MCF 10A (cell line): ENCODE measurements at regions of chr10 and their contacts with region 1.

Region 1: DNA sequence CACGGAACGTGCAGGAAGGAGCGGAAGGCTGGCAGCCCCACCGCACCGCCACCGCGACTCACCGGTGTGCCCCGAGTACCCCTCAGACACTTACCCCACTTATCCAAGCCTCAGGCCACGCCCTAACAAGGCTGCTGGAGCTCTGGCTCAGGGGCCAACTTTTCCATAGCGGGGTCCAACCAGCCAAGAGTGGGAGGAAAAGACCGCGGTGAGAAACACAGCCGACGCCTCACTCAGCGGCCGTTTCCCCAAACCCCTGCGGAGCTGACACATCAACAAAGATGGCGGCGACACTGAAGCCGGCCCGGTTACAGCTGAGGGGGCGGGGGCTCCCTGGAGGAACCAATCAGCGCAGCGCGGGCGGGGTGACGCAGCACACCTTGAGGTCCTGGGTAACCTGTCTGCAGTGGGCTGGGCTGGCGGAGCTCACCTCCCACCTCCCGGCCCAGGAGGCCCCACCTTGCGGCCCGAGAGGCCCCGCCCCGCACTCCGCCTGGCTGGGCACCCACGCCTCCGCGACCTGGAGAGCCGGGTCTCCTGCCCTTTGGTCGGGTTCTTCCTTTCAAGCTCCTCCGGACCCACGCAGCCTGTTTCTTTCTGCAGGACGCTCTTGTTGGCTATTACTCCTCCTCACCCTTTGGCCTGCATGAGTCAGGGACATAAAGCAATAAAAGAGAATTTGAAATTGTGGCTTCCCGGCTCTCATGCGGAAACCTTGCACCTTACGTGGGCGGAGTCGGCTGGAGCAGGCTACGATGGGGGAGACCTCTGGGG is at the start of gene CCDC186:
- DNase-seq: peak; percentile 96
- H3K4me3 Mint-ChIP-seq: peak within 1 kb of the TSS; percentile 97
- H3K27ac Mint-ChIP-seq: peak within 1 kb of the TSS; percentile 99
- H3K4me1 Mint-ChIP-seq: peaks cover 6% of the 10 kb centered on the region
- H3K27me3 Mint-ChIP-seq: no peaks in the 10 kb centered on the region
- CTCF ChIP-seq: no peak
- total RNA-seq, gene CCDC186: 20.6 and 20.9 TPM in 2 replicates

Region 2: DNA sequence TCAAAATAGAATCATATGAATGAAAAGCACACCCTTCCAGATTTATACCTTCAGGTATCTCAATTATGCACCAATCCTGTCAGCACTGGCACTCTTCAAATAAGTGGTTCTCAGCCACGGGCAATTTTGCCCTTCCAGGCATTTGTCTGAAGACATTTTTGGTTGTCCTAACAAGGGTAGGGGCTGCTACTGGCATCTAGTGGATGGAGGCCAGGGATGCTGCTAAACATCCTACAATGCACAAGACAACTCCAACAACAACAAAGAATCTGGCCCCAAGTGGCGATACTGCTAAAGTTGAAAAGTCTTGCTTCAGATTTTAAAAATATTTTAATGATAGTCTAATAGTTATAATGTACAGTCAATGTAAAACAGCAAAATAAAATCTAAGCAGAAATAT is 16.2 kb before region 1 on chr10:
- CTCF ChIA-PET with region 1: interaction called, 10 read pairs
- POLR2A ChIA-PET with region 1: interaction called, 31 read pairs
- intact Hi-C with region 1: no loop called
- DNase-seq: no peak
- H3K4me3 Mint-ChIP-seq: no peak overlapping the region
- H3K27ac Mint-ChIP-seq: no peak overlapping the region
- H3K4me1 Mint-ChIP-seq: no peaks in the 10 kb centered on the region
- H3K27me3 Mint-ChIP-seq: no peaks in the 10 kb centered on the region
- CTCF ChIP-seq: no peak

Region 3: GRCh38 chr10:114239117-114239993 is 65.2 kb after region 1 on chr10 and contains the start of gene VWA2:
- CTCF ChIA-PET with region 1: no interaction called
- POLR2A ChIA-PET with region 1: interaction called, 107 read pairs
- intact Hi-C with region 1: no loop called
- DNase-seq: no peak
- H3K4me3 Mint-ChIP-seq: no peak within 1 kb of the TSS
- H3K27ac Mint-ChIP-seq: no peak within 1 kb of the TSS
- H3K4me1 Mint-ChIP-seq: peaks cover 9% of the 10 kb centered on the region
- H3K27me3 Mint-ChIP-seq: no peaks in the 10 kb centered on the region
- CTCF ChIP-seq: no peak
- total RNA-seq, gene VWA2: not detected in 2 replicates

Region 4: GRCh38 chr10:114266520-114266919 is 92.4 kb after region 1 on chr10:
- CTCF ChIA-PET with region 1: no interaction called
- POLR2A ChIA-PET with region 1: interaction called, 75 read pairs
- intact Hi-C with region 1: loop called (anchors 2 kb)
- DNase-seq: peak; percentile 72
- H3K4me3 Mint-ChIP-seq: no peak overlapping the region
- H3K27ac Mint-ChIP-seq: peak overlapping the region; percentile 79
- H3K4me1 Mint-ChIP-seq: peaks cover 27% of the 10 kb centered on the region
- H3K27me3 Mint-ChIP-seq: no peaks in the 10 kb centered on the region
- CTCF ChIP-seq: no peak

Region 5: DNA sequence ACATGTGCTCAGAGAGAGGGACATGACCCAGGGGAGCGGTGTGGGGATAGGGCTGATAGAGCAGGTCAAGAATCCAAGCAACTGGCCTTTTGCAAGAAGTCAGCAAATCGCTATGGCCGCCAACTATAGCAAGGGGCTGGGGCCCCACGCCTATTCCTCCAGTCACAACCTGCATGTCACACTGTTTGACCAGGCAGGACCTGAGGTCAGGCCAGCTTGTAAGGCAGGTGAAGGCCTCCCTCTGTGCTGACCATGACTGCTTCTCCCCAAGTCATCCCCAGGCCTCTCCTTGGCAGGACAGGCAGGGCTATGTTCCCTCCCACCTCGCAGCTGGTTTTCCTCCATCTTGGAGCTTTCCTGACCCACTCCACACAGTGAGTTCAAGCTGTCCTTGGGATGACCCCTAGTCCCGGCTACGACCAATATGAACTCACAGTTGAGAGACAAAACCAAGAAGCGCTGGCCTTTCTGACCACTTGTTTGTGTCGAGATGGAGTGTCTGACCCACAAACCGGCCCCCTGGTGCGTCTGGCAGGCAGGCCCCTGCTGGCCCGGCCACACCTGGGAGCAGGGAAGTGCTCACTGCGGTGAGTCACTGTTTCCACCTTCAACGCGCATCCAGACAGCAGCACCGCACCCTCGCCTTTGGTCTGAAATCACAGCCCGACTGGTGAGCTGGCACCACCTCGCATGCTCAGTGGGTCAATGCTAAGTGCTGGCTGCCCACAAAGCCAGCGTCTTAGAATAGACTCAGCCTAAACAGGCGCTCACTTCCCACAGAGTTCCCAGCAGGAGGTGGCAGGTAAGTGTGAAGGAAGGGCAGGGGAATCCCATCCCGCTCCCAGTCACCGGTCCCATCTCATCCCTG is 146.4 kb after region 1 on chr10:
- CTCF ChIA-PET with region 1: no interaction called
- POLR2A ChIA-PET with region 1: interaction called, 14 read pairs
- intact Hi-C with region 1: no loop called
- DNase-seq: peak; percentile 95
- H3K4me3 Mint-ChIP-seq: peak overlapping the region; percentile 31
- H3K27ac Mint-ChIP-seq: peak overlapping the region; percentile 97
- H3K4me1 Mint-ChIP-seq: peaks cover 35% of the 10 kb centered on the region
- H3K27me3 Mint-ChIP-seq: no peaks in the 10 kb centered on the region
- CTCF ChIP-seq: no peak

Region 6: DNA sequence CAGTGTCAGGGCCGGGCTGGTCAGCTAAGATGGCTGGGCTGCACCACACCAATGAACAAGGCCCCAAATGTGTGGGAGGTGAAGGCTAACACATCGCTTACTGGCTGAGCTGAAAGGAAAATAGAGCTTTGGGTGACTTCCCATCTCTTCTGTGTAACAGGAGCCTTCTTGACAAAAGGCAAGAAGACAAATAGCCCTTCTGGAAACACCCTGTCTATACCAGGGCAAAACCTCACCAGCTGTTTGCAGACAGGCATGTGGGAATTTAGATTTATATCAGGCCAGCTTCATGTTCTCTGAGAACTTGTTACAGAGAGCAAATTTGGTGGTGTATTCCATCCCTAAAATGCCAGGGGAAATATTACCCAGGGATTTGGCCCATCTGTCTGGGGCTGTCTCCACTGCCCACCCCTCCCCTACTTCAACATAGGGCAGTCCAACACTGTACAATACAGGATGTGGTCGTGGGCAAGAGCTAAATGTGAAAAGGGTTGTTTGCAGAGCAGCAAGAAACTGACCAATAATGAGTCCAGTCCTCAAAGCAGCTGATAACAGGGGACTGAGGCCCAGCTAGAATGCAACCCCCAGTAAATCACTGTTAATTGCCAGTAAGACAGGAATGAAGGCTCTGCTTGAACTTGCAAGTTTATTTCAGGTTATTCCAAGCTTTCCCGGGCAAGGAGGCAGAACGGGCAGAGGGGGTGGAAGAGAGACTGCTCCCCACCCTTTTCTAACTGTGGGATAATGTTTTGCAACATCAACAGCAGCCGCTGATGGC is 193.1 kb after region 1 on chr10:
- CTCF ChIA-PET with region 1: no interaction called
- POLR2A ChIA-PET with region 1: no interaction called
- intact Hi-C with region 1: no loop called
- DNase-seq: no peak
- H3K4me3 Mint-ChIP-seq: no peak overlapping the region
- H3K27ac Mint-ChIP-seq: no peak overlapping the region
- H3K4me1 Mint-ChIP-seq: no peaks in the 10 kb centered on the region
- H3K27me3 Mint-ChIP-seq: no peaks in the 10 kb centered on the region
- CTCF ChIP-seq: no peak